GM13977 (cell line): ENCODE measurements at regions of chr1 and their contacts with region 1.

Region 1: GRCh38 chr1:169809370-169810095 is 14.8 kb upstream of the METTL18 start:
- DNase-seq: peak; percentile 47
- CTCF ChIP-seq: peak; percentile 58

Region 2: DNA sequence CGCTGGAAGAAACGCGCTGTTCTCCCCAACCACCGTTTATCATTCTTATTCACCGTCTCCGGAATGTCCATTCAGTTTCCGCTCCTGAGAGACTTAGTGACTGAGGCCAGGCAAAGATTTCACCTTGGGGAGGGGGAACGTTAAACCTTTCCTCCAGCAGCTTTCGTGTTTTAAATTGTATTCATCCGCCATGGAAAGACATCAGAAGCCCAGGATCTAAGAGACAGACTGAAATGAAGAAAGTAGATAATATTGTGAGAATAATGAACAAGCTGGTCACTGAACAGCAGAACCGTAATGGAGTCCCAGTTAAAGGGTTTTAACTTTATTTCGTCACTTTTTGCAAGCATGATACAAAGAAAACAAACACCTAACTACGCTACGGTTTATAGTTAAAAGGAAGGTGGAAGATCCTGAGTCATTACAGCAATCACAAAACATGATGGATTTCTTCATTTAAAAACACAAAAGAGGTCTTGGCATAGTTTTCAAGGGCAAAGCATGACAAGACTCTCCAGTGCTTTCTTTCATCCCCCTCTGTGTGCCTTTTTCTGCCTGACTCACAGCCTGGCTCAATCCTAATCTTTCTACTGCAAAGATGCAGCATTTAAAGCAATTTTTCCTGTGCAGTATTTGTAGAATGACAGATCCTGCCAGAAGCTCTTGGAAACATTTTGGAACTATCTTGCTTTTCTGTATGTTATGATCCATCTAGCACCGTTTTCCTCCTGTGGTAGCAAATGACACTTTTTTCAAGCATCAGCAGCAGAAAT is 323.1 kb before region 1 on chr1:
- in situ Hi-C with region 1: no loop called
- DNase-seq: no peak
- CTCF ChIP-seq: no peak

Region 3: GRCh38 chr1:169586395-169587255 is 222.9 kb before region 1 on chr1 and contains the start of gene F5:
- in situ Hi-C with region 1: loop called (anchors 25 kb)
- DNase-seq: peak; percentile 47
- CTCF ChIP-seq: peak; percentile 62

Region 4: GRCh38 chr1:169644298-169644697 is 165.2 kb before region 1 on chr1:
- in situ Hi-C with region 1: no loop called
- DNase-seq: no peak
- CTCF ChIP-seq: no peak

Region 5: DNA sequence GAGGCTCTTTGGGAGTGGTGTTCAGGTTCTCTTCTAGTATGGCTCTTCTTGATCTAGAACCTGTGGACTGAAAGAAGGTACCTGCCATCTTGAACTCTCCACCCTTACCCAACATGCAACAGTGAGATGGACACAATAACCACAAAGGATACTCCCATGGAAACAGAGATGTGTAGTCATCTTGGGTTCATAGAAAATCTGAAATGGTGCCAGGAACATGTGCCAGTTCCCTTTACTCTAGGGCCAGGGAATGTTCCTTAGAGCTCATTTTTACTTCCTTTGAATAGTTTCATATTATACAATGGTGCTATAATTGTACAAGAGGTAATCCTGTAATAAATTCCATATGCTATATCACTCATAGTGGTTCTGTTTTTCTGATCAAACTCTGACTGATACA is 97.4 kb after region 1 on chr1:
- in situ Hi-C with region 1: no loop called
- DNase-seq: no peak
- CTCF ChIP-seq: no peak